ENCODE measurements at regions of chr1 and their contacts with region 1.

Region 1: GRCh38 chr1:16009030-16009709 is 5.1 kb downstream of the SRARP start:
- DNase-seq: peak; percentile 85
- H3K4me3 Mint-ChIP-seq: no peak overlapping the region
- H3K27ac Mint-ChIP-seq: no peak overlapping the region
- H3K4me1 Mint-ChIP-seq: peaks cover 14% of the 10 kb centered on the region
- H3K27me3 Mint-ChIP-seq: peaks cover 2% of the 10 kb centered on the region

Region 2: GRCh38 chr1:15573477-15573876 is 435.7 kb before region 1 on chr1:
- CTCF ChIA-PET with region 1: no interaction called
- intact Hi-C with region 1: no loop called
- DNase-seq: no peak
- H3K4me3 Mint-ChIP-seq: no peak overlapping the region
- H3K27ac Mint-ChIP-seq: no peak overlapping the region
- H3K4me1 Mint-ChIP-seq: peaks cover 17% of the 10 kb centered on the region
- H3K27me3 Mint-ChIP-seq: no peaks in the 10 kb centered on the region

Region 3: DNA sequence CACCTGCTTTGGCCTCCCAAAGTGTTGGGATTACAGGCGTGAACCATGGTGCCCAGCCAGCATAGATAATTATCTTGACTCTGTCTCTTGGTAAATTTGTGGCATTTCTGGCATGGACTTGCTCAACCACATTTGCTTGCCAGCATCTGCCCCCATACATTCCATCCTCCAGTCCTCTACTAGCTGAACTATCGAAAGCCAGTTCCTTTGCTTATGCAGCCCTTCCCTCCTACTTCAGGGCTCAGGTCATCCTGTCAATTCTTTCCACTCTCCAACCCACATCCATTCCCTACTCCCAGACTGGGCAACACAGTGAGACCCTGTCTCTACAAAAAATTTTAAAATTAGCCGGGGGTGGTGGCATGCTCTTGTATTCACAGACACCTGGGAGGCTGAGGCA is 188.7 kb before region 1 on chr1:
- CTCF ChIA-PET with region 1: interaction called, 18 read pairs
- intact Hi-C with region 1: loop called (anchors 1 kb)
- DNase-seq: no peak
- H3K4me3 Mint-ChIP-seq: no peak overlapping the region
- H3K27ac Mint-ChIP-seq: no peak overlapping the region
- H3K4me1 Mint-ChIP-seq: peaks cover 5% of the 10 kb centered on the region
- H3K27me3 Mint-ChIP-seq: no peaks in the 10 kb centered on the region

Region 4: GRCh38 chr1:16032388-16033103 is 23.4 kb after region 1 on chr1:
- CTCF ChIA-PET with region 1: interaction called, 4 read pairs
- intact Hi-C with region 1: loop called (anchors 1 kb)
- DNase-seq: peak; percentile 70
- H3K4me3 Mint-ChIP-seq: no peak overlapping the region
- H3K27ac Mint-ChIP-seq: no peak overlapping the region
- H3K4me1 Mint-ChIP-seq: peaks cover 2% of the 10 kb centered on the region
- H3K27me3 Mint-ChIP-seq: peaks cover 17% of the 10 kb centered on the region

Region 5: GRCh38 chr1:16187748-16188401 is 178.7 kb after region 1 on chr1:
- CTCF ChIA-PET with region 1: interaction called, 6 read pairs
- intact Hi-C with region 1: loop called (anchors 2 kb)
- DNase-seq: peak; percentile 81
- H3K4me3 Mint-ChIP-seq: no peak overlapping the region
- H3K27ac Mint-ChIP-seq: no peak overlapping the region
- H3K4me1 Mint-ChIP-seq: no peaks in the 10 kb centered on the region
- H3K27me3 Mint-ChIP-seq: no peaks in the 10 kb centered on the region

Region 6: DNA sequence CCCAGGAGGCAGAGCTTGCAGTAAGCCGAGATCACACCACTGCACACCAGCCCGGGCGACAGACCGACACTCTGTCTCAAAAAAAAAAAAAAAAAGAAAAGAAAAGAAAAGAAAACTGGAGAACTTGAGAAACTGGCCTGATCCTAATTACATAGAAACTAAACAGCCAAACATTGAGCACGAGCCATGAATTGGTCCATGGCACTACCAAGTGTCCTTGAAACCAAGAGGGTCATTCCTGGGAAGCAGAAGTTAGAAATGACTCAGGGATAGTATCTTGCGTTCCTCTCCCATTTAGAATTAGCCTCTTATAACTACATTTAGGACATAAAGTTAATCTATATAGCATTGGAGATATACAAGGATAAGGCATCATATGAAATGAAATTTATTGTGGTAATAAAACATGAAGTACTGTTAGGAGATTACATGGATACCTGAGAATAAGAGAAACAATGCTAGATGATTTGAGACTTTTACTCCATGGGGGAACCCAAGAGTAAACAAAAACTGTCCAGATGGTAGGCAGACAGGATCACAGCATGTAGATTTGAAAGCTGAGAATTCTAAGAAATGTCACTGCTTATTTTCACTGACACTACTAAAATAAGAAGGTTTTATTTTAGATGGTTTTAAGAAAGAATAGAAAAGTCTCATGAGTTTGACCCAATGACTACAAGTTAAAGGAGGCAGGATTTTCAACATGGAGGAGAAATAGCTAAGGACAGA is 267.3 kb after region 1 on chr1:
- CTCF ChIA-PET with region 1: no interaction called
- intact Hi-C with region 1: no loop called
- DNase-seq: no peak
- H3K4me3 Mint-ChIP-seq: no peak overlapping the region
- H3K27ac Mint-ChIP-seq: no peak overlapping the region
- H3K4me1 Mint-ChIP-seq: peaks cover 3% of the 10 kb centered on the region
- H3K27me3 Mint-ChIP-seq: no peaks in the 10 kb centered on the region